ENCODE measurements at regions of chr9 and their contacts with region 1.

Region 1: DNA sequence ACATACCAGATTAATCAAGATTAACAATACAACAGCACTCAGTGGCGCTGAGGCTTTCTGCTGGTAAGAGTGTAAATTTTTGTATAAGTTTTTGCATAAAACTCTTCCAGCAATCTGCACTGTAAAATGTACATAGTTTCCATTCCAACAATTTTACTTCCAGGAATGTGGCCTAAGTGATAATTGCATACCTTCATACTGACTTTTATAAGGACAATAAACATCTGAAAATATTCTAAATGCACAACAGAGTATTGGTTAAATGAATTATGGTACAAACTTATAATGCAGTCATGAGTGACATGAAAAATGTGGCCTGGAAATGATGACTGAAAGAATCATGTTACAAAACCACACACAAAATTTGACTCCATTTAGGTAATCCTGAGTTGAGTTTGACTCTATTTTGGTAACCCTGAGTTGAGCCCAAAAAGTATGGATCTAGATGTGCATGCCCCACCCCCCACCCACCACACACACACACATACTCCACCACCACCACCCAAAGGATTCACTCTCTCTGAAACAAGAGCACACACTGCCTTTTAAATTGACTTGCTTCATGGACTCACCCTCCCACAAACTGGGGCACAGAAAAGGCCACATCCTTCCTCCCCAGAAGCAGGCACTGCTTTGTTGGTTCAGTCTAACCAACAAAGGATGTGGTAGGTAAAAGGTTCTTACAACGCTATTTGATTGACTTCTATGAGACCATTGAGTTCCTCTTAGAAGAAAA is 137.6 kb downstream of the SUSD1 start:
- DNase-seq: peak; percentile 36 to 87
- ATAC-seq: peak; percentile 86 to 99 (median 92)
- H3K4me3 ChIP-seq: no peak overlapping the region
- H3K4me3 Mint-ChIP-seq: peak overlapping the region; percentile 59
- H3K27ac ChIP-seq: peak overlapping the region; percentile 28
- H3K27ac Mint-ChIP-seq: peak overlapping the region; percentile 39 to 59
- H3K4me1 ChIP-seq: peaks cover 59% of the 10 kb centered on the region
- H3K4me1 Mint-ChIP-seq: peaks cover 56 to 64% of the 10 kb centered on the region in 2 donors
- H3K27me3 ChIP-seq: no peaks in the 10 kb centered on the region
- H3K27me3 Mint-ChIP-seq: no peaks in the 10 kb centered on the region
- CTCF ChIP-seq: no peak

Region 2: GRCh38 chr9:111839388-111839787 is 198.1 kb before region 1 on chr9:
- intact Hi-C with region 1: no loop called
- DNase-seq: no peak
- ATAC-seq: no peak
- H3K4me3 ChIP-seq: no peak overlapping the region
- H3K4me3 Mint-ChIP-seq: no peak overlapping the region
- H3K27ac ChIP-seq: no peak overlapping the region
- H3K27ac Mint-ChIP-seq: no peak overlapping the region
- H3K4me1 ChIP-seq: no peaks in the 10 kb centered on the region
- H3K4me1 Mint-ChIP-seq: no peaks in the 10 kb centered on the region
- H3K27me3 ChIP-seq: no peaks in the 10 kb centered on the region
- H3K27me3 Mint-ChIP-seq: peaks cover 16 to 37% of the 10 kb centered on the region in 2 donors
- CTCF ChIP-seq: no peak

Region 3: DNA sequence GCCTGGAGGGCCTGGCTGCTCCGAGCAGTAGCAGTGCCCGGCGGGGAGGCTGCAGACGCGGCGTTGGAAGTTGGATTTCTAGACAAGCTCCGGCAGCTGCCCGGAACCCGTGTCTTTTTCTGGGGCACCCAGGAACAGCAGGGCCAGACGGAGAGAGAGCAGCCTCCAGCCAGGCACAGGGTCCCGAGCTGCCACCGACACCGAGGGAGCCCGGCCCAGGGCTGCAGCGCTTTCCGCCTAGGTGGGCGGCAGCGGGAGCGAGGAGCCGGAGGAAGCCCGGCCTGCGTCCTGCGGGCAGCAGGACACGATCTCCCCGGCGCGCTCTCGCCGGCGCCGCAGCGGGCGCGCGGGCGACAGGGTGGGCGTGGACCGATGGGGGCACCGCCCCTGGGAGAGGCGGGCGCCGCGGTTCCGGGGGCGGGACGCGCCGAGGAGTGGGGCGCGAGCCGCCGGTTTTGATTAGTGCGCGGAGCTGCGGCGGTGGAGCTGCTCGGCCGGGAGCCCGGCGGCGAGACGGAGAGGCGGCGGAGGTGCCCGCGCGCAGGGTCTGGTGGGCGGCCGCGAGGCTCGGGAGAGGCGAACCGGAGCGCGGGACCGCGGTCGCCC is 141.0 kb before region 1 on chr9 and contains the start of gene UGCG:
- intact Hi-C with region 1: loop called (anchors 5 kb)
- DNase-seq: peak; percentile 92 to 93
- ATAC-seq: peak; percentile 92 to 98 (median 95)
- H3K4me3 ChIP-seq: peak within 1 kb of the TSS; percentile 95
- H3K4me3 Mint-ChIP-seq: peak within 1 kb of the TSS; percentile 99
- H3K27ac ChIP-seq: peak within 1 kb of the TSS; percentile 80
- H3K27ac Mint-ChIP-seq: peak within 1 kb of the TSS in 1 of 2 donors; percentile 91
- H3K4me1 ChIP-seq: peaks cover 10% of the 10 kb centered on the region
- H3K4me1 Mint-ChIP-seq: peaks cover 9 to 12% of the 10 kb centered on the region in 2 donors
- H3K27me3 ChIP-seq: no peaks in the 10 kb centered on the region
- H3K27me3 Mint-ChIP-seq: no peaks in the 10 kb centered on the region
- CTCF ChIP-seq: no peak
- total RNA-seq, gene UGCG: 17.9 to 21.4 (median 18.8) TPM

Region 4: GRCh38 chr9:111914749-111915424 is 122.6 kb before region 1 on chr9:
- intact Hi-C with region 1: no loop called
- DNase-seq: peak in 1 of 2 donors; percentile 57
- ATAC-seq: no peak
- H3K4me3 ChIP-seq: no peak overlapping the region
- H3K4me3 Mint-ChIP-seq: no peak overlapping the region
- H3K27ac ChIP-seq: no peak overlapping the region
- H3K27ac Mint-ChIP-seq: peak overlapping the region in 1 of 2 donors; percentile 29
- H3K4me1 ChIP-seq: peaks cover 15% of the 10 kb centered on the region
- H3K4me1 Mint-ChIP-seq: peaks cover 36 to 46% of the 10 kb centered on the region in 2 donors
- H3K27me3 ChIP-seq: no peaks in the 10 kb centered on the region
- H3K27me3 Mint-ChIP-seq: no peaks in the 10 kb centered on the region
- CTCF ChIP-seq: no peak

Region 5: GRCh38 chr9:112020680-112021596 is 16.5 kb before region 1 on chr9:
- intact Hi-C with region 1: no loop called
- DNase-seq: no peak
- ATAC-seq: no peak
- H3K4me3 ChIP-seq: no peak overlapping the region
- H3K4me3 Mint-ChIP-seq: no peak overlapping the region
- H3K27ac ChIP-seq: no peak overlapping the region
- H3K27ac Mint-ChIP-seq: no peak overlapping the region
- H3K4me1 ChIP-seq: no peaks in the 10 kb centered on the region
- H3K4me1 Mint-ChIP-seq: no peaks in the 10 kb centered on the region
- H3K27me3 ChIP-seq: no peaks in the 10 kb centered on the region
- H3K27me3 Mint-ChIP-seq: peaks cover 8 to 13% of the 10 kb centered on the region in 2 donors
- CTCF ChIP-seq: no peak

Region 6: DNA sequence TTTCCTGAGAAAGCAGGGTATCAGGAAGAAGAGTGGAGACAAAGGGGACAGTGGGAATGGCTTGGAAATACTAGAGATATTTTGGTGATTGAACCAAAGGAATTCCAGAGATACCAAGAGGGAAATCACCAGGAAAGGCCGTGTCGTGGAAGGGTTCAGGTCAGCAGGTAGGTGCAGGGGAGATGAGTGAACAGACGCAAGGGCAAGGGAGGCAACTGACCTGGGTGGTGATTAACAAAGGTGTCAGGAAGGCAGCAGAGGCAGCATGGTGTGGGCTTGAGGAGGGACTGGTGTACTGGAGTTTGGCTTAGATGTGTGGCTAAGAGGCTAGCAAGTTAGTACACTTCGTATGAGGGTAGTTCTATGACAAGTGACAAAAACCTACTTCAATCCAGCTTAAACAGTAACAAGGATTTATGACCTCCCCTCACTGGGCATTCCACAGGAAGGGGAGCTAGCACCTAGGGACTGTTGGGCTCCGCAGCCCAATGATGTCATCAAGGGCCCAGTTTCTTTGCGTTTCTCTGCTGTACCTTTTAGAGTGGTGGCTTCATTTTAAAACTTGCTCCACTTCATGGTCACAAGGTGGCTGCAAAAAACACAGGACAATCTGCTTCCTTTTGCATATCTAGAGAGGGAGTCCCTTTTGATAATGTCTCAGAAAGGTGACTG is 643.4 kb after region 1 on chr9:
- intact Hi-C with region 1: no loop called
- DNase-seq: no peak
- ATAC-seq: no peak
- H3K4me3 ChIP-seq: no peak overlapping the region
- H3K4me3 Mint-ChIP-seq: no peak overlapping the region
- H3K27ac ChIP-seq: no peak overlapping the region
- H3K27ac Mint-ChIP-seq: no peak overlapping the region
- H3K4me1 ChIP-seq: no peaks in the 10 kb centered on the region
- H3K4me1 Mint-ChIP-seq: peaks cover 0 to 5% of the 10 kb centered on the region in 2 donors
- H3K27me3 ChIP-seq: no peaks in the 10 kb centered on the region
- H3K27me3 Mint-ChIP-seq: peaks cover 0 to 6% of the 10 kb centered on the region in 2 donors
- CTCF ChIP-seq: no peak

Measured in natural killer cell (primary cell).